HEK293 (cell line): ENCODE measurements at regions of chr12 and their contacts with region 1.

Region 1: GRCh38 chr12:51083126-51083833 is at the start of gene CSRNP2:
- H3K4me3 ChIP-seq: peak within 1 kb of the TSS; percentile 91
- H3K27ac ChIP-seq: peak within 1 kb of the TSS; percentile 63
- H3K4me1 ChIP-seq: peaks cover 5% of the 10 kb centered on the region; the same call in 1 of the 2 replicates
- CTCF ChIP-seq: no peak

Region 2: GRCh38 chr12:51025836-51026638 is 57.2 kb before region 1 on chr12 and contains the start of gene SLC11A2:
- CTCF ChIA-PET with region 1: no interaction called
- POLR2A ChIA-PET with region 1: interaction called, 23 read pairs
- H3K4me3 ChIP-seq: peak within 1 kb of the TSS; percentile 78
- H3K27ac ChIP-seq: peak within 1 kb of the TSS; percentile 95
- H3K4me1 ChIP-seq: 0 out of 2 replicates have a peak, but pooled peaks cover 4% of the 10 kb centered on the region
- CTCF ChIP-seq: 0 out of 2 replicates have a peak, but pooled peaks have one; percentile 42

Region 3: DNA sequence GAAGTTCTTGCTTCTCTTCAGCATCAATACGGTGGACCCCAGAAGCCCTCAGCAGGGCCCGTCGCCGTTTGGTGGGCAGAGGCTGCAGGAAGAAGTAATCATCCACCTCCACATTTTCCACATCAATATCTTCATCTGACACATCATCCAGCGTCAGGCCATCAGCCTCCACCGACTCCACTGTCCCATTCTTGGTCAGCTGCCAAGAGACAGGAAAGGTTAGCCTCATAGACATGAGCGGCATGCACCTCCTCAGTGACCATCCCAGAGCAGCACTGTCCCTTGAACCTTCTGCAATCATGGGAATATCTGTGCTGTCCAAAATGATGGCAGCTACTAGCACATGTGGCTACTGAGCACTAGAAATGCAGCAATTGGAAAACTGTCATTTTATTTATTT is 15.5 kb before region 1 on chr12:
- CTCF ChIA-PET with region 1: interaction called, 3 read pairs
- POLR2A ChIA-PET with region 1: interaction called, 11 read pairs
- H3K4me3 ChIP-seq: no peak overlapping the region
- H3K27ac ChIP-seq: no peak overlapping the region
- H3K4me1 ChIP-seq: no peaks in the 10 kb centered on the region
- CTCF ChIP-seq: no peak

Region 4: GRCh38 chr12:51217968-51218606 is 134.8 kb after region 1 on chr12 and contains the start of gene POU6F1:
- CTCF ChIA-PET with region 1: interaction called, 4 read pairs
- POLR2A ChIA-PET with region 1: interaction called, 16 read pairs
- H3K4me3 ChIP-seq: peak within 1 kb of the TSS; percentile 65
- H3K27ac ChIP-seq: peak within 1 kb of the TSS; percentile 91
- H3K4me1 ChIP-seq: peaks cover 9% of the 10 kb centered on the region
- CTCF ChIP-seq: peak; percentile 31; the same call in 1 of the 2 replicates

Region 5: DNA sequence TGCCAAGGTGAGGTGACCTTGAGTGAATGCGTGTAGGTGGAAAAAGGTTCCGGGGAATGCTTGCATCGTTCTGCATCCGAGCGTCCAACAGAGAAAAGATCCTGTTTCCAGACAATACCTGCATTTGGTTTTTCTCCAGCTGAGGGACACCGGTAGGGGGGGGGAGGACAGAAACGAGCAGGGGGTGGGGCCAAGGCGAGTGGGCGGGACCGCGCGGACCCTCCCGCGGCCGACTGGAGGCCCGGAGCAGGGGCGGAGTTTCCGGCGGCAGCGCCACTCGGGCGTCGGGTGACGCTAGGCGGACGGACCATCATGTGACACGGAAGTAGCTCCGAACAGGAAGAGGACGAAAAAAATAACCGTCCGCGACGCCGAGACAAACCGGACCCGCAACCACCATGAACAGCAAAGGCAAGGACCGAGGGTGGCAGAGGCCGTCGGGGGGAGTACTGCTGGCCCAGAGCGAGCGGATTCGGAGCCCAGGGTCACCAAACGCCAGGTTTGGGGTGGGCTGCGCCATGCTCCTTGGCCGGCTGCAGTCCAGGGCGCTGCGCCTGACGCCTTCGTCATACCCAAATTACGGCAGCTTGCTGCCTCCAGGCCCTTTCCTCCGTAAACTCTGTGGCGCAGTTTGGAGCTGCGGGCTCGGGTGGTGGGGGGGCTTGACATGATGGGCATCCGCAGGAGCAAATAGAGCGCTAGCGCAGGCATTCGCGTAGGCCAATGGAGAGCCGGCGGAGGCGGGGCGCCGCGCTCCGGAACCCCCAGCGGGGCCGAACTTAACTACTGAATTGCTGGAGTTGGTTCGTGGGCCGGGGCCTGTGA is 155.4 kb after region 1 on chr12 and contains the start of gene DAZAP2:
- CTCF ChIA-PET with region 1: interaction called, 3 read pairs
- POLR2A ChIA-PET with region 1: interaction called, 14 read pairs
- H3K4me3 ChIP-seq: peak within 1 kb of the TSS; percentile 68
- H3K27ac ChIP-seq: peak within 1 kb of the TSS; percentile 91
- H3K4me1 ChIP-seq: peaks cover 4% of the 10 kb centered on the region; the same call in 1 of the 2 replicates
- CTCF ChIP-seq: no peak; the same call in none of the 2 replicates